A549 (cell line): ENCODE measurements at regions of chr7 and their contacts with region 1.

Region 1: GRCh38 chr7:23055582-23056178 is 41.8 kb upstream of the HYCC1 start:
- DNase-seq: peak; percentile 38 to 73
- ATAC-seq: peak; percentile 90 to 98
- H3K4me3 ChIP-seq: no peak overlapping the region
- H3K27ac ChIP-seq: no peak overlapping the region
- H3K4me1 ChIP-seq: no peaks in the 10 kb centered on the region
- CTCF ChIP-seq: peak; percentile 94
- EP300 ChIP-seq: no peak
- POLR2A ChIP-seq: no peak
- RAD21 ChIP-seq: peak; percentile 92 to 95

Region 2: GRCh38 chr7:22551768-22552513 is 503.7 kb before region 1 on chr7:
- CTCF ChIA-PET with region 1: interaction called, 101 read pairs
- POLR2A ChIA-PET with region 1: no interaction called
- DNase-seq: no peak
- ATAC-seq: no peak
- H3K4me3 ChIP-seq: no peak overlapping the region
- H3K27ac ChIP-seq: no peak overlapping the region
- H3K4me1 ChIP-seq: 0 out of 3 replicates have a peak, but pooled peaks cover 2% of the 10 kb centered on the region
- CTCF ChIP-seq: no peak
- EP300 ChIP-seq: no peak
- POLR2A ChIP-seq: no peak
- RAD21 ChIP-seq: no peak

Region 3: DNA sequence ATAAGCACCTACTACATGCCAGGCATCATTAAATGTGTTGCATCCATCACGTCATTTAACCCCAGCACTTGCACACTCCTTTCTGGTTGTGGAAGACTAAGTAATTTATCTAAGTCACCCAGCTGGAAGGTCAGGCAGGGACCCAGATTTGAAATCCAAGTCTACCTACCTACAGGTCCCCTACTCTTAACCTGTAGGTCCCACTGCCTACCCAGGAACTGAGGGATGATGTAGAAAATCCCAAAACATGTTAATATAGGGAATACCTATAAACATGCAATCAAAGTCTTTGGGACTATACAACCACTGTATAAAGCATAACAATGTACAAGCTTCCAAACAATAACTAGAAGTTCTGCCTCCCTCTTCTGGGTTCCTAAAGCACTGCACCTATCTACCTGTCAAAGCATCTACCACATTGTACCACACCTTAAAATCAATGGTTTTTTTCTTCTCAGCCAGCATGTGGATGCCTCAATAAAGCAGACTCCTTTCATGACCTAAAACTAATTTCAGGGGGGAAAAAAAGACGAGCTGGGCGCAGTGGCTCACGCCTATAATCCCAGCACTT is 323.0 kb before region 1 on chr7:
- CTCF ChIA-PET with region 1: interaction called, 53 read pairs
- POLR2A ChIA-PET with region 1: no interaction called
- DNase-seq: peak in 1 of 2 experiments; percentile 28
- ATAC-seq: peak; percentile 60 to 65; a peak in 4 of 6 replicates
- H3K4me3 ChIP-seq: no peak overlapping the region
- H3K27ac ChIP-seq: no peak overlapping the region
- H3K4me1 ChIP-seq: peaks cover 9% of the 10 kb centered on the region; the same call in 1 of the 3 replicates
- CTCF ChIP-seq: peak; percentile 34; the same call in 2 of the 3 replicates
- EP300 ChIP-seq: no peak
- POLR2A ChIP-seq: no peak
- RAD21 ChIP-seq: peak; percentile 45 to 53; a peak in 4 of 5 replicates

Region 4: GRCh38 chr7:22854158-22855048 is 201.3 kb before region 1 on chr7:
- CTCF ChIA-PET with region 1: interaction called, 10 read pairs
- POLR2A ChIA-PET with region 1: interaction called, 12 read pairs
- DNase-seq: peak; percentile 85 to 90
- ATAC-seq: peak; percentile 74 to 85
- H3K4me3 ChIP-seq: peak overlapping the region; percentile 89
- H3K27ac ChIP-seq: peak overlapping the region; percentile 96 to 97
- H3K4me1 ChIP-seq: peaks cover 41% of the 10 kb centered on the region
- CTCF ChIP-seq: no peak; the same call in 1 of the 3 replicates
- EP300 ChIP-seq: no peak
- POLR2A ChIP-seq: peak; percentile 86
- RAD21 ChIP-seq: no peak; a peak in 3 of 5 replicates

Region 5: GRCh38 chr7:23020742-23021401 is 34.8 kb before region 1 on chr7:
- CTCF ChIA-PET with region 1: interaction called, 16 read pairs
- POLR2A ChIA-PET with region 1: no interaction called
- DNase-seq: peak in 1 of 2 experiments; percentile 7
- ATAC-seq: peak; percentile 61 to 62; a peak in 4 of 6 replicates
- H3K4me3 ChIP-seq: no peak overlapping the region
- H3K27ac ChIP-seq: no peak overlapping the region
- H3K4me1 ChIP-seq: peaks cover 4% of the 10 kb centered on the region; the same call in 2 of the 3 replicates
- CTCF ChIP-seq: no peak
- EP300 ChIP-seq: no peak
- POLR2A ChIP-seq: no peak
- RAD21 ChIP-seq: no peak

Region 6: GRCh38 chr7:23067271-23067670 is 11.6 kb after region 1 on chr7:
- CTCF ChIA-PET with region 1: interaction called, 14 read pairs
- POLR2A ChIA-PET with region 1: no interaction called
- DNase-seq: no peak
- ATAC-seq: no peak
- H3K4me3 ChIP-seq: no peak overlapping the region
- H3K27ac ChIP-seq: no peak overlapping the region
- H3K4me1 ChIP-seq: peaks cover 3% of the 10 kb centered on the region; the same call in 1 of the 3 replicates
- CTCF ChIP-seq: no peak
- EP300 ChIP-seq: no peak
- POLR2A ChIP-seq: no peak
- RAD21 ChIP-seq: no peak

Region 7: GRCh38 chr7:24135003-24135817 is 1079.5 kb after region 1 on chr7:
- CTCF ChIA-PET with region 1: no interaction called
- POLR2A ChIA-PET with region 1: no interaction called
- DNase-seq: no peak
- ATAC-seq: no peak
- H3K4me3 ChIP-seq: no peak overlapping the region
- H3K27ac ChIP-seq: no peak overlapping the region
- H3K4me1 ChIP-seq: no peaks in the 10 kb centered on the region
- CTCF ChIP-seq: no peak
- EP300 ChIP-seq: no peak
- POLR2A ChIP-seq: no peak
- RAD21 ChIP-seq: no peak